ENCODE measurements at regions of chr7 and their contacts with region 1.

Region 1: GRCh38 chr7:45663167-45663921 is 89.2 kb downstream of the ADCY1 start:
- DNase-seq: peak; percentile 28
- H3K4me3 ChIP-seq: no peak overlapping the region
- H3K27ac ChIP-seq: no peak overlapping the region
- H3K4me1 ChIP-seq: no peaks in the 10 kb centered on the region
- H3K27me3 ChIP-seq: no peaks in the 10 kb centered on the region
- CTCF ChIP-seq: peak; percentile 46 to 76 (median 66)
- EP300 ChIP-seq: no peak
- POLR2A ChIP-seq: no peak

Region 2: GRCh38 chr7:45872116-45873034 is 209.0 kb after region 1 on chr7:
- in situ Hi-C with region 1: loop called in 1 of 4 experiments (anchors 25 kb)
- intact Hi-C with region 1: no loop called
- DNase-seq: no peak
- H3K4me3 ChIP-seq: no peak overlapping the region
- H3K27ac ChIP-seq: no peak overlapping the region
- H3K4me1 ChIP-seq: no peaks in the 10 kb centered on the region
- H3K27me3 ChIP-seq: no peaks in the 10 kb centered on the region
- CTCF ChIP-seq: peak in 3 of 5 experiments; percentile 12 to 31 (median 15)
- EP300 ChIP-seq: no peak
- POLR2A ChIP-seq: no peak

Measured in transverse colon (tissue), 4 donors.